ENCODE measurements at regions of chr1 and their contacts with region 1.

Region 1: GRCh38 chr1:153617675-153618074 is 1.6 kb upstream of the S100A14 start:
- DNase-seq: peak in 2 of 3 donors; percentile 61 to 76
- H3K4me3 ChIP-seq: no peak overlapping the region
- H3K27ac ChIP-seq: no peak overlapping the region
- H3K4me1 ChIP-seq: peaks cover 0 to 4% (median 2%) of the 10 kb centered on the region in 4 experiments
- H3K27me3 ChIP-seq: no peaks in the 10 kb centered on the region

Region 2: DNA sequence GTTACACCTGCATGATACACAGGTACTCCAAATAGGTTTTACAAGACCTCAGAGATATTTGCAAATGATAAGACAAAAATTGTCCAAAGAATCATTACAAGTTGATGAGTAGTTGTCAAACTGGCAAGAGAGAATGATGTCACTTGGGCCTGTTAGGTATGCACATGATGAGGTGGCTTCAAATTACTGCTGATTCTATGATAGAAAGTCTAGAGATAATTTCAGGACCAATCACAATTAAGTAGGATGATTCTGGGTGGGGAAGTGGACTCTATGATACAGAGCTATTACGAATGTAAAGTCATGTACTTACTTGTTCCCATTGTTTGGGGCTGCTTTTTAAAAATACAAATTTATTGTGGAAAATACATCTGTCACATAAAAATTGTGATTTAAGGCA is 591.9 kb before region 1 on chr1:
- CTCF ChIA-PET with region 1: no interaction called
- POLR2A ChIA-PET with region 1: no interaction called
- DNase-seq: no peak
- H3K4me3 ChIP-seq: no peak overlapping the region
- H3K27ac ChIP-seq: no peak overlapping the region
- H3K4me1 ChIP-seq: no peaks in the 10 kb centered on the region
- H3K27me3 ChIP-seq: peaks cover 0 to 2% (median 0%) of the 10 kb centered on the region in 5 experiments

Region 3: GRCh38 chr1:153510984-153511410 is 106.7 kb before region 1 on chr1:
- CTCF ChIA-PET with region 1: interaction called, 62 read pairs
- POLR2A ChIA-PET with region 1: no interaction called
- DNase-seq: peak; percentile 61 to 74 (median 63)
- H3K4me3 ChIP-seq: no peak overlapping the region
- H3K27ac ChIP-seq: no peak overlapping the region
- H3K4me1 ChIP-seq: peaks cover 0 to 14% (median 9%) of the 10 kb centered on the region in 4 experiments
- H3K27me3 ChIP-seq: no peaks in the 10 kb centered on the region

Region 4: GRCh38 chr1:153577624-153578051 is 40.0 kb before region 1 on chr1:
- CTCF ChIA-PET with region 1: interaction called, 262 read pairs
- POLR2A ChIA-PET with region 1: interaction called, 6 read pairs
- DNase-seq: no peak
- H3K4me3 ChIP-seq: no peak overlapping the region
- H3K27ac ChIP-seq: no peak overlapping the region
- H3K4me1 ChIP-seq: peaks cover 6 to 13% (median 10%) of the 10 kb centered on the region in 4 experiments
- H3K27me3 ChIP-seq: peaks cover 0 to 8% (median 0%) of the 10 kb centered on the region in 5 experiments

Region 5: DNA sequence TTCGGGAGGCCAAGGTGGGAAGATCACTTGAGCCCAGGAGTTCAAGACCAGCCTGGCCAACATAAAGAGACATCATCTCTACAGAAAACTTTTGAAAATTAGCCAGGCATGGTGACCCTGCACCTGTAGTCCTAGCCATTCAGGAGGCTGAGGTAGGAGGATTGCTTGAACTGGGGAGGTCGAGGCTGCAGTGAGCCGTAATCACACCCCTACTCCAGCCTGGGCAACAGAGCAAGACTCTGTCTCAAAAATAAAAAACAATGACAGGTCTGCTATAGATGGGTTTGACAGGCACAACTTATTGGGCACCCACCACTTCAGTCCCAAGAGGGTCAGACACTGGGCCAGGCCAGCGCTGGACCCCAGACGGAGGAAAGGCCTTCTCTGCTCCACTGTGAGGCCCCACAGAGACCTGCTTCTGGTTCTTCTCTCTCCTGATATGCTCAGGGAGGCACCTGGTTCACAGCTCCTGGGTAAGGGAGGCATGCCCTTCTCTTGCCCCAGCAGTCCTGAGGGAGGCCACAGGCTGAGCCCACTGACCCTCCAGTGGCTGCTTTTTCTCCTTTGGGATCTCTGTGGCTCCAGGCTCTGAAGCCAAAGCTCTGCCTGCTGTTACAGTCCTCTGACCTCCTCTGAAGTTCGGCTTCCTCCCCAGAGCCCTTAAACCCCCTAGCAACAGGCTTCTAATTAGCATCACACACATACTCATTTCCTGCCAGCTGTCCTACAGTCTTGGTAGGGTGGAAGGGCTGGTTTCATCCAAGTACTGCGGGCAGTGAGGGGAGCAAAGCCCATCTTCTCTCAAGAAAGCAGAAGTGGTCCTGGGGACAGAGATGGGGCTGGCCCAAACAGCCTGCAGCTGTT is 19.1 kb before region 1 on chr1:
- CTCF ChIA-PET with region 1: interaction called, 100 read pairs
- POLR2A ChIA-PET with region 1: no interaction called
- DNase-seq: peak; percentile 88 to 99 (median 97)
- H3K4me3 ChIP-seq: peak overlapping the region in 4 of 7 experiments; percentile 2 to 48 (median 32)
- H3K27ac ChIP-seq: peak overlapping the region; percentile 94
- H3K4me1 ChIP-seq: peaks cover 0 to 40% (median 17%) of the 10 kb centered on the region in 4 experiments
- H3K27me3 ChIP-seq: no peaks in the 10 kb centered on the region

Region 6: DNA sequence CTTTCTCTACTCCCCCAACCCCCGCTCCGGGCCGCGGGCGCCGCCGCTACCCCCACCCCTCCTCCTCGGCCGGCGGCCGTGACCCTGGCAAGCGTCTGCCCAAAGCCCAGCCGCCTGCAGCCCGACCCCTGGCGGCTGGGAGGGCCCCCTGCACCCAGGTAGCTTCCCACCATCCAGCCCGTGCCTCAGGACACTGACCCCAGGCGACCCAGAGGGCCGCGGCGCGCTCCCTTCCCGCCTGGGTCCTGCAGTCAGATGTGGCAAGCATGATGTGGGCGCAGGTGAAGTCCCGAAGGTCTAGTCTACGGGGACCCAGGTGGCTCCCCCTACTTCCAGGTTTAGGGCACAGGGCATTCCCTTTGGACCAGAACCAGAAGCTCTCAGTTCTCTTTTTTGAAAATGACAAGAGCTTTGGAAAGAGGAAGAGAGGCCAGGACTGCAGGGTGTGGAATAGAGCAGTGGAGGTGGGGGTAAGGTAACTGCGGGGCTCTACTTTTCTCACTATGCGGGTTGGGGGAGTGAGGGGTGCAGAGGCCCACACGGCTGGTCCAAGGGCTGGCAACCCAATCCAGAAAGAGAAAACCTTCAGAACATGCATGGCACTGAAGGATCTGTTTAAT is 329.1 kb after region 1 on chr1 and contains the start of gene DENND4B:
- CTCF ChIA-PET with region 1: no interaction called
- POLR2A ChIA-PET with region 1: no interaction called
- DNase-seq: peak; percentile 77 to 88 (median 87)
- H3K4me3 ChIP-seq: peak within 1 kb of the TSS; percentile 71 to 92 (median 83)
- H3K27ac ChIP-seq: peak within 1 kb of the TSS; percentile 83 to 91
- H3K4me1 ChIP-seq: peaks cover 4 to 33% (median 30%) of the 10 kb centered on the region in 4 experiments
- H3K27me3 ChIP-seq: no peaks in the 10 kb centered on the region

Measured in common myeloid progenitor, CD34-positive (primary cell).